HepG2 (cell line): ENCODE measurements at regions of chr19 and their contacts with region 1.

Region 1: DNA sequence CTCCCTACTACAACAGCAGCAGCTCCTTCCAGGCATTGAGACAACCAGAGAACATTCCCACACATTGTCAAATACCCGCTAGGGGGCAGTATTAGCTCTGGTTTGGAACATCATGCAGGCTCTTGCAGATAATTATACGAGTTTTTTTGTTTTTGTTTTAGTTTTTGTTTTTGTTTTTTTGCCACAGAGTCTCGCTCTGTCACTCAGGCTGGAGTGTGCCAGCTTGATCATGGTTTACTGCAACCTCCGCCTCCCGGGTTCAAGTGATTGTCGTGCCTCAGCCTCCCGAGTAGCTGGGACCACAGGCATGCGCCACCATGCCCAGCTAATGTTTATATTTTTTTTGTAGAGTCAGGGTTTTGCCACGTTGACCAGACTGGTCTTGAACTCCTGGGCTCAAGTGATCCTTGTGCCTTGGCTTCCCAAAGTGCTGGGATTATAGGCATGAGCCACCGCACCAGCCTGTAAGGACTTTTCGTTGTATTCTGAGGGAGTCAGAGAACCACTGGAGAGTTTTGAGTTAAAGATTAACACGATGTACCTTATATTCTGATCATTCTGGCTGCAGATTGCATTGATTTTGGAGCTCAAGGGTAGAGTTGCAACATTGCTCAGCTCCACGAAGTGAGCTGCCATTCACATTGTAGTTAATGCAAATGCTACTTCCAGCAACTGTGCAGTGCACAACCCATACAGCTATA is 41.7 kb upstream of the CEACAM20 start:
- DNase-seq: peak; percentile 80
- ATAC-seq: peak; percentile 90
- H3K4me3 ChIP-seq: peak overlapping the region; percentile 40 to 60 (median 49); a peak in 5 of 6 replicates
- H3K27ac ChIP-seq: peak overlapping the region; percentile 55
- H3K4me1 ChIP-seq: peaks cover 32% of the 10 kb centered on the region
- H3K27me3 ChIP-seq: no peaks in the 10 kb centered on the region
- CTCF ChIP-seq: peak; percentile 75
- EP300 ChIP-seq: peak in 1 of 2 experiments; percentile 51; a peak in 2 of 4 replicates
- POLR2A ChIP-seq: peak in 1 of 2 experiments; percentile 37; a peak in 1 of 4 replicates
- RAD21 ChIP-seq: peak; percentile 62; the same call in 1 of the 2 replicates

Region 2: DNA sequence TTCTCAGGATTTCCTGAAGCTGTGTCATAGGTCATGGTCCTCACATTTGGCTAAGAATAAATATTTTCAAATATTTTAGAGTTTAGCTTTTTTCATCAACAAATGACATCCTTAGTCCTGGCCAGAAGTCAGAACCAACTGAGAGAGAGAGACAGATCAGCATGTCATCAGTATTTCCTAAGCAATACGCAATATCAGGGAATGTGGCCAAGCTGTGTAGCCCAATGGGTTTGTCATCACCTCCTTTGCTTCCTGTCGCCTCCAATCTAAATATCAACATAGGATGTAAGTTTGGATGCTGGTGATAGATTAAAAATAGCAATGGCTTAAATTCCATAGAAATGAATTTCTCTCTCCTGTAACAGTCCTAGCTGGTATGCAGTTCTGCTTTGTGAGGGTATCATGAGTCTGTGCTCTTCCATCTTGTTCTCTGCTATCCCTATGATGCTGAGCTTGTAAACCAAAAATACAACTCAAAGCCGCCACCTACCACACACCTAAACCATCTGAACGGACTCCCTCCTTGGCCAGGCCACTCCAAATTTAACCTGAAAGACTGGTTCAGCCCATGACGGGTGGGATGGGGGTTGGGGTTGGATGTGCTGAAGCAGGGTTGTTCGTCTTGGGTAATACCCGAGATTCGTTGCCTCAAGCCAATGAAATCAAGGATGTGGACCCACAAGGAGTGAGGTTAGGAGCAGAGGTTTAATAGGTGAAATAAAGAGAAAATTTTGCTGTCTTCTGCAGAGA is 32.2 kb after region 1 on chr19:
- CTCF ChIA-PET with region 1: no interaction called
- POLR2A ChIA-PET with region 1: no interaction called
- in situ Hi-C with region 1: no loop called
- intact Hi-C with region 1: no loop called
- DNase-seq: no peak
- ATAC-seq: no peak
- H3K4me3 ChIP-seq: no peak overlapping the region
- H3K27ac ChIP-seq: no peak overlapping the region
- H3K4me1 ChIP-seq: peaks cover 45% of the 10 kb centered on the region
- H3K27me3 ChIP-seq: 0 out of 5 replicates have a peak, but pooled peaks cover 0 to 1% of the 10 kb centered on the region in 2 experiments
- CTCF ChIP-seq: no peak
- EP300 ChIP-seq: no peak
- POLR2A ChIP-seq: no peak
- RAD21 ChIP-seq: no peak

Region 3: DNA sequence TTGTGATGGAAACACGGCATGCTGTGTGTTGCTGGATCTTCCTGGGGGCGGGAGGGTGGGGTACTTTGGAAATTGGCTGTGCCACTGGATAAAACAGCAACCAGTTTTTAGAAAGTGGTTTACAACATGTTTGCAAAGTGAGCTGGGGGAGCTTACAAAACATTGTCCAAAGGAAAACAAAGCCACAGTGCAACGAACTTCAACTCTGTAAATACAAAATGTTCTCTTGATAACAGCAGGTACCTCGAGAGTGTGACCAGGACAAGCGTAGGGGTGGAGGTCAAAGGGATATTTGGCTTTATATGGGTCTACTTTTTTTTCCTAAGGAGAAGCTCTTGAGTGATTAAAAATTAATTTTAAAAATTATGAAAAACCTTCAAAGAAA is 44.7 kb after region 1 on chr19:
- CTCF ChIA-PET with region 1: no interaction called
- POLR2A ChIA-PET with region 1: interaction called, 17 read pairs
- in situ Hi-C with region 1: no loop called
- intact Hi-C with region 1: loop called (anchors 5 kb)
- DNase-seq: peak; percentile 78
- ATAC-seq: peak; percentile 48
- H3K4me3 ChIP-seq: peak overlapping the region; percentile 3 to 79 (median 33); a peak in 4 of 6 replicates
- H3K27ac ChIP-seq: peak overlapping the region; percentile 92
- H3K4me1 ChIP-seq: peaks cover 70% of the 10 kb centered on the region
- H3K27me3 ChIP-seq: no peaks in the 10 kb centered on the region; a peak in 1 of 5 replicates
- CTCF ChIP-seq: no peak
- EP300 ChIP-seq: no peak; a peak in 2 of 4 replicates
- POLR2A ChIP-seq: no peak
- RAD21 ChIP-seq: no peak

Region 4: GRCh38 chr19:44643605-44644401 is 72.7 kb after region 1 on chr19 and contains the start of gene PVR:
- CTCF ChIA-PET with region 1: no interaction called
- POLR2A ChIA-PET with region 1: interaction called, 11 read pairs
- in situ Hi-C with region 1: no loop called
- intact Hi-C with region 1: no loop called
- DNase-seq: peak; percentile 50
- ATAC-seq: peak; percentile 92
- H3K4me3 ChIP-seq: peak within 1 kb of the TSS; percentile 74 to 81 (median 79)
- H3K27ac ChIP-seq: peak within 1 kb of the TSS; percentile 82
- H3K4me1 ChIP-seq: peaks cover 60% of the 10 kb centered on the region
- H3K27me3 ChIP-seq: no peaks in the 10 kb centered on the region; a peak in 1 of 5 replicates
- CTCF ChIP-seq: peak; percentile 35
- EP300 ChIP-seq: no peak
- POLR2A ChIP-seq: peak; percentile 73 to 85
- RAD21 ChIP-seq: peak; percentile 64; the same call in 1 of the 2 replicates
- total RNA-seq, gene PVR: 18.4 and 43.4 TPM in 2 replicates

Region 5: GRCh38 chr19:44653977-44654774 is 83.0 kb after region 1 on chr19:
- CTCF ChIA-PET with region 1: interaction called, 45 read pairs
- POLR2A ChIA-PET with region 1: interaction called, 22 read pairs
- in situ Hi-C with region 1: loop called (anchors 5 kb)
- intact Hi-C with region 1: loop called (anchors 1 kb)
- DNase-seq: peak; percentile 36
- ATAC-seq: peak; percentile 75
- H3K4me3 ChIP-seq: no peak overlapping the region
- H3K27ac ChIP-seq: no peak overlapping the region
- H3K4me1 ChIP-seq: no peaks in the 10 kb centered on the region
- H3K27me3 ChIP-seq: no peaks in the 10 kb centered on the region
- CTCF ChIP-seq: peak; percentile 80
- EP300 ChIP-seq: no peak
- POLR2A ChIP-seq: no peak
- RAD21 ChIP-seq: peak; percentile 50; the same call in 1 of the 2 replicates

Region 6: DNA sequence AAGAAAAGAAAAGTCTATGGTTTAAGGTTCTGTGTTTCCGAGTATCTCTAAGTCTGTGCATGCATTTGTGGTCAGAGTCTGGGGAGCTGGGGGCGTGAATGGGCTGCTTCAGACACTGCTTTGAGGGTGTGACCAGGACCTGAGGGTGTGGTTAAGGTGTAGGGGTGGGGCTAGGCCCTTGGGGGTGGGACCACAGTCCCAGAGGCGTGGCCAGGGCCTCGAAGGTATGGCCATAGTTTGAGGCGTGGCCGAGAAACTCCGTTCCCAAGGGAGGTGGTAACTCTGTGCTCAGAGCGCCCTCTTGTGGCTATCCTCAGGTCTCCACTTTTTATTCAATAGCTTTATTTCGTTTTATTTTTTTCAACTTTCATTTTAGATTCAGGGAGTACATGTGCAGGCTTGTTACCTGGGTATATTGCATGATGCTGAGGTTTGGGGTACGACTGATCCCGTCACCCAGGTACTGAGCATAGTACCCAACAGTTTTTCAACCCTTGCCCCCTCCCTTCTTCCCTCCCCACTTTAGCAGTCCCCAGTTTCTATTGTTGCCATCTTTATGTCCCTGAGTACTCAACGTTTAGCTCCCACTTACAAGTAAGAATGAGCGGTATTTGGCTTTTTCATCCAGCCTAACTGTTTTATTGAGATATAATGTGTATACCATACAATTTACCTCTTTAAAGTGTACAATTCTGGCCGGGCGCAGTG is 199.6 kb after region 1 on chr19:
- CTCF ChIA-PET with region 1: interaction called, 3 read pairs
- POLR2A ChIA-PET with region 1: interaction called, 4 read pairs
- in situ Hi-C with region 1: loop called (anchors 10 kb)
- intact Hi-C with region 1: loop called (anchors 5 kb)
- DNase-seq: peak; percentile 89
- ATAC-seq: peak; percentile 98
- H3K4me3 ChIP-seq: no peak overlapping the region
- H3K27ac ChIP-seq: no peak overlapping the region
- H3K4me1 ChIP-seq: peaks cover 46% of the 10 kb centered on the region
- H3K27me3 ChIP-seq: no peaks in the 10 kb centered on the region
- CTCF ChIP-seq: peak; percentile 91
- EP300 ChIP-seq: no peak
- POLR2A ChIP-seq: no peak
- RAD21 ChIP-seq: peak; percentile 95